Activated T-helper 1 cell treated with anti-CD3 and anti-CD28 coated beads, Interleukin-12 subunit alpha, Interleukin-12 subunit beta, Interleukin-2, Interleukin-4 antibody, amounts not matched to agents 30 ng/mL and 10 ng/mL and 1 ng/mL, durations not matched to agents 14 hours and 24 hours and 36 hours (primary cell): ENCODE measurements at regions of chr14 and their contacts with region 1.

Region 1: DNA sequence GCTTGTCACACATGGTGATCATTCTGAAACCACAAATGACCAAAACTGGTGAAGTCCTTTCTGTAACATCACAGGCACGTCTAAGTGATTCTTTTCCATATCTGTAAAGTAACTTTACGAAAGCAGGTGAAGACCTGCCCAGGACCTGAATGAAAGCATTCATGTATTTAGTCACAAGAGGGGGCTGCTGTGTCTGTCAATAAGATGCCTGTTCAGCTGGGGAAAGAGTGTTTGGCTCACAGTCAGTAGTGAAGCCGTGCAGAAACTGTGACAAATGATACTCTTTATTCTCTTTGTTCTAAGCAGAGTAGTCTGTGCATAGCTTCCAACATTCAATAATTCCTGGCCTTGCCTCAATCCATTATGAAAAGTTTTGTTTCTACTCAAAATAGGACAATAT is 373.5 kb upstream of the OR4E1 start:
- DNase-seq: peak; percentile 31
- H3K4me3 Mint-ChIP-seq: peak overlapping the region; percentile 65
- H3K27ac Mint-ChIP-seq: peak overlapping the region; percentile 77
- H3K4me1 Mint-ChIP-seq: peaks cover 26% of the 10 kb centered on the region
- H3K27me3 Mint-ChIP-seq: peaks cover 2% of the 10 kb centered on the region

Region 2: GRCh38 chr14:22002860-22003309 is 44.2 kb before region 1 on chr14:
- intact Hi-C with region 1: loop called (anchors 2 kb)
- DNase-seq: peak; percentile 63
- H3K4me3 Mint-ChIP-seq: peak overlapping the region; percentile 80
- H3K27ac Mint-ChIP-seq: peak overlapping the region; percentile 85
- H3K4me1 Mint-ChIP-seq: peaks cover 25% of the 10 kb centered on the region
- H3K27me3 Mint-ChIP-seq: no peaks in the 10 kb centered on the region

Region 3: GRCh38 chr14:22070119-22071011 is 23.2 kb after region 1 on chr14:
- intact Hi-C with region 1: loop called (anchors 2 kb)
- DNase-seq: peak; percentile 41
- H3K4me3 Mint-ChIP-seq: peak overlapping the region; percentile 90
- H3K27ac Mint-ChIP-seq: peak overlapping the region; percentile 90
- H3K4me1 Mint-ChIP-seq: peaks cover 52% of the 10 kb centered on the region
- H3K27me3 Mint-ChIP-seq: no peaks in the 10 kb centered on the region

Region 4: GRCh38 chr14:22084393-22085281 is 37.5 kb after region 1 on chr14:
- intact Hi-C with region 1: loop called (anchors 1 kb)
- DNase-seq: no peak
- H3K4me3 Mint-ChIP-seq: peak overlapping the region; percentile 53
- H3K27ac Mint-ChIP-seq: peak overlapping the region; percentile 18
- H3K4me1 Mint-ChIP-seq: peaks cover 20% of the 10 kb centered on the region
- H3K27me3 Mint-ChIP-seq: no peaks in the 10 kb centered on the region

Region 5: DNA sequence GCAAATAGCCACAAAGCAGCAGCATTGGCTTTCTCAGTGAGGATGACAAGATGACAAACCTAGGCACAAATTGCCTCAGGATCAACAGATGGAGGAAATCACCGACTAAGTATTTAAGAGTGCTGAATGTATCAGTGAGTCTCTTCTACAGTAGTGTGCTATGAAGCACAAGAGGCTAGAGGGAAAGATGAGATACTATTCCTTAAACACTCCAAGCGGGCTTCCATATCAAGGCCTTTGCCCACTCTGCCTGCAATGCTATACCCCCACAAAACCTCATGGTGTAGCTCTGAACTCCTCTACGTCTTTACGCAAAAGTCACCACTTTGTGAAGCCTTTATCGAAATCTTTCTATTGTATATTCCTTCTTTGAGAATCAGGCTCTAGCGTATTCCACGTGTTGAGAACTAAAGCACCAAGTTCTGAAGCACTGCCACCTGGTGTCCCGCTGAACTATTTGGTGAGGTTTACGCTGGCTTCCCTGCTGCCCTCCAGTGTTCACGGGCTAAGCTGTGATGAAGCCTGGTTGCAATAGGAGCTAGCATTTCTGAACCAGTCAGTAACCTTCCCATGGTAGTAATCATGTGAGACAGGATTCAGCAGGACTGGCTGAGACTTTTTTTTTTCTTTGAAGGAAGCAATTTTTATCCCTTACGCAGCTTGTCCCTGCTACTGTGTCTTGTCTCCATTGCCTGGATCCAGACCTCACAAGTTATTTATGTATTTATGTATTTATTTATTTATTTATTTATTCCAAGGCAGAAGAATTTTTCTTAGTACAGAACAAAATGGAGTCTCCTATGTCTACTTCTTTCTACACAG is 53.0 kb after region 1 on chr14:
- intact Hi-C with region 1: loop called (anchors 1 kb)
- DNase-seq: peak; percentile 39
- H3K4me3 Mint-ChIP-seq: no peak overlapping the region
- H3K27ac Mint-ChIP-seq: peak overlapping the region; percentile 12
- H3K4me1 Mint-ChIP-seq: peaks cover 53% of the 10 kb centered on the region
- H3K27me3 Mint-ChIP-seq: no peaks in the 10 kb centered on the region

Region 6: DNA sequence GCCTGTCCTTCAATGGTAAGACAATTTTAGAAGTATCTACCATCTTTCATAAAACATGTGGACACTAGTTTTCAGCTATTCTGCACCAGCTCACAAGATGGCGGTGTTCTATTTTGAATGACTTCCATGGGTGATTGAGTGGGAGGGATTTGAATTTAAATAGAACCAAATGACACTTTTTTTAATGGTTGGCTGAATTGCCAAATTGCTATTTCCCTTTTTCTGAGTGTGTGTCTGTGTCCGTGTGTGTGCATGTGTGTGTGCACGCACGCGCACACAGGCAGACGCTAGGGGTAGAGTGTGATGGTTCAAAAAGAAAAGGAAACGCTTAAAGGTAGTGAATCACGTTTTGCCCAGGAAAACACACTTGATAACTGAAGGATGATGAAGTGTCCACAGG is 179.3 kb after region 1 on chr14:
- intact Hi-C with region 1: no loop called
- DNase-seq: no peak
- H3K4me3 Mint-ChIP-seq: peak overlapping the region; percentile 73
- H3K27ac Mint-ChIP-seq: peak overlapping the region; percentile 73
- H3K4me1 Mint-ChIP-seq: peaks cover 4% of the 10 kb centered on the region
- H3K27me3 Mint-ChIP-seq: no peaks in the 10 kb centered on the region